ENCODE measurements at regions of chr2 and their contacts with region 1.

Region 1: GRCh38 chr2:196068271-196069209 is at the start of gene DNAH7:
- DNase-seq: peak; percentile 95
- H3K4me3 Mint-ChIP-seq: peak within 1 kb of the TSS; percentile 88
- H3K27ac Mint-ChIP-seq: peak within 1 kb of the TSS; percentile 46
- H3K4me1 Mint-ChIP-seq: peaks cover 9% of the 10 kb centered on the region
- H3K27me3 Mint-ChIP-seq: peaks cover 2% of the 10 kb centered on the region
- total RNA-seq, gene DNAH7: 0.07 to 0.17 TPM

Region 2: DNA sequence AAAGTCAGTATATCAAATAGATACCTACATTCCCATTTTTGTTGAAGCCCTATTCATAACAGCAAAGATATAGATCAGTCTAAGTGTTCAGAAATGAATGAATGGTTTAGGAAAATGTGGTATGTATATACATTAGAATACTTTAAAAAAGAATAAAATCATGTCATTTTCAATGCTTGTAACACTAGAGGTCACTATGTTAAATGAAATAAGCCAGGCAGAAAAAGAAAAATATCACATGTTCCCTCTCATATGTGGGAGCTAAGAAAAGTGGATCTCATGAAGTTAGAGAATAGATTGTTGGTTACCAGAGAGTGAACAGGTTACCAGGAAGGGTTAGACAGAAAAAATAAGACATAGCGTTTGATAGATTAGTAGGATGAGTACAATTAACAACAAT is 1522.6 kb before region 1 on chr2:
- CTCF ChIA-PET with region 1: no interaction called
- POLR2A ChIA-PET with region 1: no interaction called
- intact Hi-C with region 1: loop called (anchors 5 kb)
- DNase-seq: no peak
- H3K4me3 Mint-ChIP-seq: no peak overlapping the region
- H3K27ac Mint-ChIP-seq: no peak overlapping the region
- H3K4me1 Mint-ChIP-seq: no peaks in the 10 kb centered on the region
- H3K27me3 Mint-ChIP-seq: peaks cover 3% of the 10 kb centered on the region

Region 3: DNA sequence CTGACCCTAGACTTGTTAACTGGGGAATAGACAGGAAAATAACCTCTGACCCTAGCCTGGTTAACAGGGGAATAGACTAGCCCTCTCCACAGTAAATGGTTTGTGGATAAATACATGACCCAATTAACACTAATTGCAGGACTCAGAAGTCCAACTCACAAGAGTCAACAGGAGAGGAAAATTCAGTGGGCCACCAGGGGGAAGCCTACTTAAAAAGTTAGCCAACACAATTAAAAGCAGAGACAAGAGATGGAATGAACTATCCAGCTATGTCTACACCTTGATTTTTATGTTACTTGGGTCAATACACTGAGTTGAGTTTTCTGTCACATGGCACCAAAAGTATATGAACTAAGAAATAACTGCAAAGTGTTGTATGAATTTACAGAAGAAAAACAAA is 570.4 kb before region 1 on chr2:
- CTCF ChIA-PET with region 1: no interaction called
- POLR2A ChIA-PET with region 1: no interaction called
- intact Hi-C with region 1: loop called (anchors 5 kb)
- DNase-seq: peak; percentile 66
- H3K4me3 Mint-ChIP-seq: no peak overlapping the region
- H3K27ac Mint-ChIP-seq: no peak overlapping the region
- H3K4me1 Mint-ChIP-seq: peaks cover 32% of the 10 kb centered on the region
- H3K27me3 Mint-ChIP-seq: no peaks in the 10 kb centered on the region

Region 4: DNA sequence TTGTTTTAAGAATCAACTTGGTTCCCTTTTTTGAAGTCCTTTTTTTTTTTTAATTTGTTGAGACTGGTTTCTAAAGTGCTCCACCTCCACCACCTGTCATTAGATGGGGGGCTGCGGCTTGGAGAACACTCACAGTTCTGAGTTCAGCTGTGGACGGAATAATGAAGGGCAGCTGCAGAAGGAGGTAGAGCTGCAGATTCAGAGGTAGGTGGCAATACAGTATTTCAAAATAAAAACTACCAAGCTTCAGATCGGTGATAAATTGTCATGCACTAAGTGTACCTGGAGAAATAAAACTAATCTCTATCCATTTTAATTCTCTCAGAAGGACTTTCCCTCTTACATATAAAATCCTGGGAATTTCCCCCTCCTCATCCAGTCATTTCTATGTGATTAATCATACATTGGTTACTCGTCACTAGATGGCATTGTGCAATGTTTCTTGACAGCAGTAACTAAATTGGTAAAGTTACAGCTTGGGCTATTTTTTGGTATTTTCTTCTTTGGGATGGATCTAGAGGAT is 492.6 kb before region 1 on chr2:
- CTCF ChIA-PET with region 1: interaction called, 9 read pairs
- POLR2A ChIA-PET with region 1: no interaction called
- intact Hi-C with region 1: loop called (anchors 5 kb)
- DNase-seq: no peak
- H3K4me3 Mint-ChIP-seq: no peak overlapping the region
- H3K27ac Mint-ChIP-seq: peak overlapping the region; percentile 64
- H3K4me1 Mint-ChIP-seq: peaks cover 68% of the 10 kb centered on the region
- H3K27me3 Mint-ChIP-seq: no peaks in the 10 kb centered on the region

Region 5: DNA sequence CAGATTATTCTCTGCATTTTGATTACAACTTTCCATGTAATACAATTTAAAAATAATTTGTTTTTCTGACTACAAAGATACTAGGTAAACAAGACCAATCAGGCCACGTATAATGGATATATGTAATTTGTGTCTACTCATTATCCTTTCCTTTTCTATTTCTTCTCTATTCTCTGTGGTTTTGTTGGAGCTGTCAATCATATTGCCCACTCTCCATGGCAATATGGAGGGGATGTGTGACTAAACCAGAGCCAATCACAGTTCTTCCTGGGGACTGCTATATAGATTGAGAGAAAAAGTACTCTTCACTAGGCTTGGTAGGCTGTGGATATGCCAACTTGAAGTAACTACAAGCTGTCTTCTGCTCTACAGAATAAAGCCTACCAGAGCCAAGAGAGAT is 144.7 kb before region 1 on chr2:
- CTCF ChIA-PET with region 1: interaction called, 3 read pairs
- POLR2A ChIA-PET with region 1: no interaction called
- intact Hi-C with region 1: loop called (anchors 1 kb)
- DNase-seq: no peak
- H3K4me3 Mint-ChIP-seq: no peak overlapping the region
- H3K27ac Mint-ChIP-seq: no peak overlapping the region
- H3K4me1 Mint-ChIP-seq: no peaks in the 10 kb centered on the region
- H3K27me3 Mint-ChIP-seq: no peaks in the 10 kb centered on the region

Region 6: GRCh38 chr2:196639180-196640030 is 570.9 kb after region 1 on chr2 and contains the start of gene CCDC150:
- CTCF ChIA-PET with region 1: interaction called, 3 read pairs
- POLR2A ChIA-PET with region 1: no interaction called
- intact Hi-C with region 1: loop called (anchors 1 kb)
- DNase-seq: peak; percentile 97
- H3K4me3 Mint-ChIP-seq: peak within 1 kb of the TSS; percentile 90
- H3K27ac Mint-ChIP-seq: peak within 1 kb of the TSS; percentile 62
- H3K4me1 Mint-ChIP-seq: peaks cover 15% of the 10 kb centered on the region
- H3K27me3 Mint-ChIP-seq: no peaks in the 10 kb centered on the region
- total RNA-seq, gene CCDC150: 13.2 to 13.9 TPM

Measured in activated CD4-positive, alpha-beta memory T cell treated with anti-CD3 and anti-CD28 coated beads for 36 hours (primary cell).